ENCODE measurements at regions of chr4 and their contacts with region 1.

Region 1: DNA sequence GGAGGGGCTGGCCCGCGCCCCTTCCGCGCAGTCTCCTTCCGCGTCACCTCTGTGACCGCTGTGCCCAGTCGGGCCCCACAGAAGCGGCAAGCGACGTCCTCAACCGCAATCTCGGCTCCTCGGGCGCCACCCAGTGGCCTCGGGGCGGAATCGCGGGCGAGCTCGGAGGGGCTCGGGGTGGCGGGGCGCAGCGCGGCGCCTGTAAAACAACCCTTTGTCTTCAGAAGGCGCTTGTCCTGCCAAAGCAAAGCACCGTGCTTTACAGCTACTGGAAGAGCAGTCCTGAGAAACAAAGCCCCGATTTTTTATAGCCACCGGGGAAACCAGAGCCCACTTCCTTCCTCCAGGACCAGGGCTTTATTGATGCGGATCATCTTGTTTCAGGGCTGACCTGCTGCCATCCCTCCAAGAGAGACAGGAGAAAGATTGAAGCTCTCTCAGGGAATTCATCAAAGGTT is 37.3 kb upstream of the CDKN2AIP start:
- DNase-seq: peak; percentile 89
- H3K4me3 Mint-ChIP-seq: peak overlapping the region; percentile 67
- H3K27ac Mint-ChIP-seq: peak overlapping the region; percentile 73
- H3K4me1 Mint-ChIP-seq: peaks cover 14% of the 10 kb centered on the region
- H3K27me3 Mint-ChIP-seq: no peaks in the 10 kb centered on the region

Region 2: DNA sequence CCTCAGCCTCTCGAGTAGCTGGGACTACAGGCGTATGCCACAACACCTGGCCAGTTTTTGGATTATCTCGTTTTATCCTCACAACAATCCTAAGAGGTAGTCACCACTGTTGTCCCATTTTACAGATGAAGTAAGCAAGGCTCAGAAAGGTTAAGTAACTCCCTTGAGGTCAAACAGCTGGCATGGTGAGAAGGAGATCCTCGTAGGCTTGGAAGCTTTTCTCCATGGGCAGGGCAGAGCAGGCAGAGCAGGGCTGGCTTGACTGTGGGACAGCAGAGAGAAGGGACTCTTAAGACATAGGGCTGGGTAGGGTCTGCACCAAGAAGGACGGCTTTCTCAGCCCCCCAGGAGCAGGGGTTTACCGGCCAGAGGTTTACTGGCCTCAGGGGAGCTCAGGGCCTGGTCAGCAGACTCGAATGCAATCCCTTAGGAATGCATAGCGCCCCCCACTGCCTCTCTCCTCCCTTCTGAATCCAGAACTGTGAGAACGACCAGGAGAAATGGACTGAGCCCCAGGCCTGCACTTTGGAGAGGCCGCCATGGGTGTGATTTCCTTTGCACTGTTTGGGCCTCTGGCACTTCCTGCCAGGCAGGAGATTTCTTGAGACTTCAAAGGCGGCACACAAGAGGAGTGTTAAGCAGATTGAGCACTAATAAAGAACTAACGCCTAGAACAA is 23.3 kb after region 1 on chr4:
- CTCF ChIA-PET with region 1: interaction called, 10 read pairs
- POLR2A ChIA-PET with region 1: interaction called, 5 read pairs
- DNase-seq: peak; percentile 30
- H3K4me3 Mint-ChIP-seq: no peak overlapping the region
- H3K27ac Mint-ChIP-seq: peak overlapping the region; percentile 59
- H3K4me1 Mint-ChIP-seq: peaks cover 32% of the 10 kb centered on the region
- H3K27me3 Mint-ChIP-seq: no peaks in the 10 kb centered on the region

Region 3: GRCh38 chr4:183563874-183564273 is 156.7 kb after region 1 on chr4:
- CTCF ChIA-PET with region 1: no interaction called
- POLR2A ChIA-PET with region 1: no interaction called
- DNase-seq: no peak
- H3K4me3 Mint-ChIP-seq: no peak overlapping the region
- H3K27ac Mint-ChIP-seq: no peak overlapping the region
- H3K4me1 Mint-ChIP-seq: no peaks in the 10 kb centered on the region
- H3K27me3 Mint-ChIP-seq: peaks cover 8% of the 10 kb centered on the region

Region 4: GRCh38 chr4:183576701-183577404 is 169.7 kb after region 1 on chr4:
- CTCF ChIA-PET with region 1: no interaction called
- POLR2A ChIA-PET with region 1: no interaction called
- DNase-seq: no peak
- H3K4me3 Mint-ChIP-seq: no peak overlapping the region
- H3K27ac Mint-ChIP-seq: no peak overlapping the region
- H3K4me1 Mint-ChIP-seq: peaks cover 4% of the 10 kb centered on the region
- H3K27me3 Mint-ChIP-seq: no peaks in the 10 kb centered on the region